GM10248 (cell line): ENCODE measurements at regions of chr12 and their contacts with region 1.

Region 1: DNA sequence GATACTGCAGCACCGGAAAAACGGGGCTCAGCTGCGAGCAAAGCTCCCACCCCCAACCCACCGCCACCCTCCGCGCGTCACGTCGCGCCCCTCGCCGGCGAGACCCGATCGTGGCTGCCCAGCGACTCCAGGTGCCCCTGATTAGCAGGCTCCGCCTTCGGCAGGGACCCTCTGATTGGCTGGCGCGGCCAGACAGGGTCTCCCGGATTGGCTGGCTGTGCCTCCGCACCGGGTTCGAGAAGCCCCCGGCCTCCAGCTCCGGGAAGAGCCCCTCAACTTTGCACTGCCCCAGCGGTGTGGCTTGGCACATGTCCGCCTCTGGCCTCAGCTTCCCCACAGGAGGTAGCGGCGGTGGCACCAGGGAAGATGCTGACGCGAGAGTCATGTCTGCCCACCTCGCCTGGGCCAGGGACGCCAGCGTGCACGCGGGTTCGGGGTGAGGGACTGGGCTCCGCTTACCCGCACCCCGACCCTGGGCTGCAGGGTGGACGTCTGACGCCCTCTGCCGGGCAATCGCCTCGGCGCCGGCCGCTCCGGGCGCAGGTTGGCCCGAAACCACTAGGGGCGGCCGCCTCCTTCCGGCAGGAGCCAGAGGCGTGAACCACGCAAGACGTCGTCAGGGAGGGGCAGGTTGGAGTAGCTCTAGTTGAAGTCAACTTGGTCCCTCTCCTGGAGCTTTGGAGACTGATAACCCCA is 498 bp upstream of the RHOF start:
- DNase-seq: peak; percentile 88
- CTCF ChIP-seq: peak; percentile 100

Region 2: DNA sequence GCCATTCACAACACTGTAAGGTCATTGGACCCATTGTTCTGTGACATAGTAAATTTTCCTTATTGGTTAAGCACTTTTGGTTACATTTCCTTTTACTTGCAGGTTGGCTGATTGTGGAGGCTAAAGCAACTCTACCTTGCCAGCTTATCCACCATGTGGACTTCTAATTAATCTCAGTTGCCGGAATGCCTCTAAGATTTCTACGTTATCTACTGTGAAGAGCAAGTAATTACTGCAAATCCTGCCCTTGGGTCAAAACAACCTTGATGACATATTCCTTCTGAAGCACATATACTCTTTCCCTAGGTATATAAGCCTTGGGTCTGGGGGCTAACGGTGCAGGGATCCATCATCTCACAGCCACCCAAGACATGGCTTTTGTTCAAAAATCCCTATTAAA is 105.0 kb before region 1 on chr12:
- CTCF ChIA-PET with region 1: interaction called, 53 read pairs
- POLR2A ChIA-PET with region 1: interaction called, 3 read pairs
- DNase-seq: no peak
- CTCF ChIP-seq: no peak

Region 3: GRCh38 chr12:121719926-121720414 is 74.0 kb before region 1 on chr12:
- CTCF ChIA-PET with region 1: interaction called, 24 read pairs
- POLR2A ChIA-PET with region 1: interaction called, 6 read pairs
- DNase-seq: no peak
- CTCF ChIP-seq: no peak

Region 4: GRCh38 chr12:121811434-121812319 is 17.7 kb after region 1 on chr12:
- CTCF ChIA-PET with region 1: interaction called, 565 read pairs
- POLR2A ChIA-PET with region 1: interaction called, 22 read pairs
- DNase-seq: peak; percentile 91
- CTCF ChIP-seq: peak; percentile 87

Region 5: GRCh38 chr12:121858662-121859572 is 64.9 kb after region 1 on chr12 and contains the start of gene HPD:
- CTCF ChIA-PET with region 1: interaction called, 14 read pairs
- POLR2A ChIA-PET with region 1: no interaction called
- DNase-seq: no peak
- CTCF ChIP-seq: no peak

Region 6: GRCh38 chr12:121917979-121918678 is 124.1 kb after region 1 on chr12 and contains the start of gene CFAP251:
- CTCF ChIA-PET with region 1: interaction called, 11 read pairs
- POLR2A ChIA-PET with region 1: no interaction called
- DNase-seq: peak; percentile 97
- CTCF ChIP-seq: peak; percentile 56

Region 7: DNA sequence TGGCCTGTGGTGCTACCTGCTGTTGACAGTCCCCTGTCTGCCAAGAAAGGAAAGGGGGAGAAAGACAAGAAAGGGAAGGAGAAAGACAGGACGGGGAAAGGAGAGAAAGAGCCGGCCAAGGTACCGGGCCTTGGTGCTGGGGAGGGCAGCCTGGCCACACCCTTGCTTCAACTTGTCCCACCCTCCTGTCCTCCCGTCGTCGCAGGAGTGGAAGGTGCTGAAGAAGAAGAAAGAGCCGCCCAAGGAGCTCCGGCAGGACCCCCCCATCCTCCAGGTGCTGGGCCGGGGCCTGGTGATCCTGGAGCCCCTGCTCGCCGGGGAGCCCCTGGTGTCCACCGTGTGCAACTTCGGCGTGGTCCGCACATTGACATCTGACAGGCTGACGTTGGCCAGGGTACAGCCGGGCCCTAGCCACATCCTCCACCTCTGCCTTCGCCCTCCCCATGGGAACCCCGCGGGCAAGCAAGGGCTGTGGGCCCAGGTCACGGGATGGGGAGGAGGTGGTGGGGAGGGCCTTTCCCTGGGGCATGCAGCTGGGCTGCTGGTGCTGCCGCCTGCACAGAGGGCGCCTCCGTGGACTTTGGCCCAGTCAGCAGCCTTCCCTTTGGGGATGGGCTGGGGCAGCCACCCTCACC is 406.7 kb after region 1 on chr12:
- CTCF ChIA-PET with region 1: no interaction called
- POLR2A ChIA-PET with region 1: no interaction called
- DNase-seq: no peak
- CTCF ChIP-seq: no peak